PC-3 (cell line): ENCODE measurements at regions of chr3 and their contacts with region 1.

Region 1: GRCh38 chr3:177359593-177360357 is 162.5 kb upstream of the TBL1XR1 start:
- DNase-seq: peak; percentile 99
- ATAC-seq: peak; percentile 59
- H3K4me3 ChIP-seq: peak overlapping the region; percentile 53
- H3K27ac ChIP-seq: peak overlapping the region; percentile 95
- H3K4me1 ChIP-seq: peaks cover 45% of the 10 kb centered on the region
- H3K27me3 ChIP-seq: no peaks in the 10 kb centered on the region
- CTCF ChIP-seq: no peak

Region 2: GRCh38 chr3:177197041-177197727 is 162.6 kb before region 1 on chr3 and contains the start of gene TBL1XR1:
- CTCF ChIA-PET with region 1: interaction called, 10 read pairs
- POLR2A ChIA-PET with region 1: interaction called, 8 read pairs
- intact Hi-C with region 1: loop called (anchors 1 kb)
- DNase-seq: peak; percentile 91
- ATAC-seq: peak; percentile 67
- H3K4me3 ChIP-seq: peak within 1 kb of the TSS; percentile 92
- H3K27ac ChIP-seq: peak within 1 kb of the TSS; percentile 87
- H3K4me1 ChIP-seq: peaks cover 31% of the 10 kb centered on the region
- H3K27me3 ChIP-seq: no peaks in the 10 kb centered on the region
- CTCF ChIP-seq: no peak
- total RNA-seq, gene TBL1XR1: 77.6 and 109 TPM in 2 replicates

Region 3: GRCh38 chr3:177306252-177306651 is 53.5 kb before region 1 on chr3:
- CTCF ChIA-PET with region 1: no interaction called
- POLR2A ChIA-PET with region 1: no interaction called
- intact Hi-C with region 1: loop called (anchors 1 kb)
- DNase-seq: peak; percentile 89
- ATAC-seq: peak; percentile 78
- H3K4me3 ChIP-seq: no peak overlapping the region
- H3K27ac ChIP-seq: no peak overlapping the region
- H3K4me1 ChIP-seq: peaks cover 10% of the 10 kb centered on the region
- H3K27me3 ChIP-seq: no peaks in the 10 kb centered on the region
- CTCF ChIP-seq: no peak

Region 4: DNA sequence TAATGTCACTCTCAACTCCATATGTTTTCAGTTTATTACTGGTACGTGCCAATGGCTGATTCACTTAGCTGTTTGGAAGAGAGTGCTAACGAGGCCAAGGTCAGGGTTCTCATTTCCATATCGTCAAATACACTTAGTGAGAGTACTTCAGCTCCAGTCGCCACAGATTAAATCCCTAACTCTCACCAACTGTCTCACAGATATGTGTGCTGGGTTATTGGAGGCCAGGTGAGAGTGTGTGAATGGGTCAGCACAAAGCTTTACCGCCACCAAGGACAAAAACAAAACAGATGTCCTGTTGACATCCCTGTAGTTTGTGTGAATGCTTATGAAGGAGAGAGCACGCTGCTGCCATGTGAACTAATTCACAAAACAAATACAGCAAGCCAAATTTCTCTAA is 29.0 kb before region 1 on chr3:
- CTCF ChIA-PET with region 1: no interaction called
- POLR2A ChIA-PET with region 1: no interaction called
- intact Hi-C with region 1: no loop called
- DNase-seq: no peak
- ATAC-seq: no peak
- H3K4me3 ChIP-seq: no peak overlapping the region
- H3K27ac ChIP-seq: no peak overlapping the region
- H3K4me1 ChIP-seq: peaks cover 5% of the 10 kb centered on the region
- H3K27me3 ChIP-seq: no peaks in the 10 kb centered on the region
- CTCF ChIP-seq: no peak

Region 5: DNA sequence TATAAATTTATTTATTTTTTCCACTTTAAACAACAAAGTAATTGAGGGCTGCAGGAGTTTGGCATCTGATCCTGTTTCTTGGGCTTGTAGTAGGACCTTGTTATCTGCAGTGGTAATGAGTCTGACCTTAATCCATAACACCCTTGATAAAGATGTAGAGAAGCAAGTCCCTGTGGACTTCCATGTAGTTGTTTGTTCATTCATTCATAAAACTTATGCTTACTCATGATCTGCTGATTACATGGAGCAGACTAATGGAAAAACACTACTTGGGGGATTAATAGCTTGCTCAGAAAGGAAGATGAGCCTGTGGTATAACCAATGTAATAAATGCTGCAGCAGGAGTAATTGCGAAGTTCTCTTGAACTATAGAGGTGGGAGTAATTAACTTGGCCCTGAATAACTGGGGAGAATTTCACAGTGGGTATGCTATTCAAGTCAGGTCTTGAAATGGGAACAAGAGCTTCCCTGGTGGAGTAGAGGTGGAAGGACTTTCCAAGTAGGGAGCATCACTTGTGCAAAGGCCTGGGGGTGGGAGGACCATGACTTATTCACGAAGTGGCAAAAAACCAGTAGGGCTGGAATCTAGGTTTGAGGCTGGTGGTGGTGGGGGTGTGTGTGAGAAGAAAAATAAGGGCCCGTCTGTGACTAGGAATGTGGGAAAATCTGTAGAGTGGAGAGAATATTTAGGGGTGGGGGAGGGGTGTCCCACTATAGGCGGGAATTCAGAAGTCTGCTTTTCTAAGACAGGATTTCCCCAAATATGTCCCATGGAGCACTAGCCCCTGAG is 109.2 kb after region 1 on chr3:
- CTCF ChIA-PET with region 1: no interaction called
- POLR2A ChIA-PET with region 1: no interaction called
- intact Hi-C with region 1: no loop called
- DNase-seq: peak; percentile 47
- ATAC-seq: peak; percentile 61
- H3K4me3 ChIP-seq: no peak overlapping the region
- H3K27ac ChIP-seq: peak overlapping the region; percentile 13; the same call in 1 of the 2 replicates
- H3K4me1 ChIP-seq: peaks cover 12% of the 10 kb centered on the region
- H3K27me3 ChIP-seq: no peaks in the 10 kb centered on the region
- CTCF ChIP-seq: no peak

Region 6: GRCh38 chr3:177525987-177526712 is 166.4 kb after region 1 on chr3:
- CTCF ChIA-PET with region 1: no interaction called
- POLR2A ChIA-PET with region 1: no interaction called
- intact Hi-C with region 1: no loop called
- DNase-seq: peak; percentile 37
- ATAC-seq: peak; percentile 66
- H3K4me3 ChIP-seq: no peak overlapping the region
- H3K27ac ChIP-seq: peak overlapping the region; percentile 35
- H3K4me1 ChIP-seq: peaks cover 33% of the 10 kb centered on the region
- H3K27me3 ChIP-seq: no peaks in the 10 kb centered on the region
- CTCF ChIP-seq: no peak

Region 7: DNA sequence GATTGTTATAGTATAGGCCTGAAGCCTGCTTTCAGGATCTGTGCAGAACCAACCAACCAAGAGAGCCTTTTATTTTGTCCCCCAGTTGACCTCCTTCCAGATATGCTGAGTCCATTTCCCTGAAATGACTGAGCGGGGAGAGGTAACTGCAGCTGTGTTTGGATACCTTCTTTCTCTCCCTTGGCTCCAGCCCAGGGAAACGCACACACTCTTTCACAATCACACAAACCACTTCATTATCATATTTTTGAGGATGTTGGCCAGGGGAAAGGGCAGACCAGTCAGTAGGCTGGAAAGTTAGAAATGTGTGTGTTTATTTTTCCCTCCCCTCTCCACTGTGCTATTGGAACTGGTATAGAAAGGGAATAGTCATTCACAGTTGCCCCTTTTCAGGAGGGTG is 255.2 kb after region 1 on chr3:
- CTCF ChIA-PET with region 1: no interaction called
- POLR2A ChIA-PET with region 1: no interaction called
- intact Hi-C with region 1: loop called (anchors 5 kb)
- DNase-seq: peak; percentile 97
- ATAC-seq: peak; percentile 64
- H3K4me3 ChIP-seq: no peak overlapping the region
- H3K27ac ChIP-seq: peak overlapping the region; percentile 20; the same call in 1 of the 2 replicates
- H3K4me1 ChIP-seq: peaks cover 49% of the 10 kb centered on the region
- H3K27me3 ChIP-seq: no peaks in the 10 kb centered on the region
- CTCF ChIP-seq: no peak

Region 8: DNA sequence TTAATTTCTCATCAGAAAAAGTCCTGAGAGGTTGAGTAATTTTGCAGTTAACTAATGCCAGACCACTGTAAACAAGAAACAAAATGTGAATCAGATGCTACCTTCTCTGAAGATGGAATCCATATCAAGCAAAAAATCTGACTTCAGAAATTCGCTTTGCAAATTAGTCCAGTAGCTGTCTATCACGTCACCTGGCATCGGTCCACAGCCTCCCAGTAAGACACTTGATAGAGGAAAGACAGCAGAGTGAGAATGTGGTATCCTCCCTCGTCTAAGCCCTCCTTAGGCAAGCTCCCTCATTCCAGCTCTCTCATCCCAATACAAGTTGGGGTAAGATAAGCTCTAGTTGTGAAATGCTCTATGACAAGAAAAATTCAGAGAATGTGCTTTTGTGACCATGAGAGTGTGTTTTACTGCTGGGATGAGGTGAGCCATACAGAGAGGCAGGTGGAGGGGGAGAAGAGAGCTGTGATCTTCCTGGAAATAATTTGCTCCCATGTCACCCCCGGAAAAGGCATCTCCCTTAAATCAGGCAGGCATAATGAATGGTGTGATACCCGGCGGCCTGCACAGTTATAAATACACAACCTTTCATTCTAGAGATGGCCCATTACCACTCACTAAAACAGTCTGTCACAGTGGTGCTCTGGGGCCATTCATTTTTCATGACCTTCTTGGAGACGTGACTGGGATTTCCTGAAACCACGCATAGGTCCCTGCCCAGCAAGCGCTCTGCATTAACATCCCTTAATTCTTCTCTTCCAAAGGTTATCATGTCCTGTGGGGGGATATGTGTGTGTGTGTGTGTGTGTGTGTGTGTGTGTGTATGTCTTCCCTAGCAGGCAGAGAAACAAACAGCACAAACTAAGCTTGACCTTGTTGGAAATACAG is 574.5 kb after region 1 on chr3:
- CTCF ChIA-PET with region 1: no interaction called
- POLR2A ChIA-PET with region 1: no interaction called
- intact Hi-C with region 1: loop called (anchors 5 kb)
- DNase-seq: peak; percentile 21
- ATAC-seq: no peak
- H3K4me3 ChIP-seq: no peak overlapping the region
- H3K27ac ChIP-seq: no peak overlapping the region
- H3K4me1 ChIP-seq: peaks cover 53% of the 10 kb centered on the region
- H3K27me3 ChIP-seq: no peaks in the 10 kb centered on the region
- CTCF ChIP-seq: no peak